Prostate gland (tissue), 2 donors: ENCODE measurements at regions of chr7 and their contacts with region 1.

Region 1: GRCh38 chr7:25669961-25670841 is 441.9 kb upstream of the NPVF start:
- DNase-seq: peak; percentile 70
- H3K4me3 ChIP-seq: no peak overlapping the region
- H3K27ac ChIP-seq: peak overlapping the region; percentile 53 to 64
- H3K4me1 ChIP-seq: peaks cover 6% of the 10 kb centered on the region
- H3K27me3 ChIP-seq: no peaks in the 10 kb centered on the region
- CTCF ChIP-seq: no peak
- POLR2A ChIP-seq: no peak

Region 2: DNA sequence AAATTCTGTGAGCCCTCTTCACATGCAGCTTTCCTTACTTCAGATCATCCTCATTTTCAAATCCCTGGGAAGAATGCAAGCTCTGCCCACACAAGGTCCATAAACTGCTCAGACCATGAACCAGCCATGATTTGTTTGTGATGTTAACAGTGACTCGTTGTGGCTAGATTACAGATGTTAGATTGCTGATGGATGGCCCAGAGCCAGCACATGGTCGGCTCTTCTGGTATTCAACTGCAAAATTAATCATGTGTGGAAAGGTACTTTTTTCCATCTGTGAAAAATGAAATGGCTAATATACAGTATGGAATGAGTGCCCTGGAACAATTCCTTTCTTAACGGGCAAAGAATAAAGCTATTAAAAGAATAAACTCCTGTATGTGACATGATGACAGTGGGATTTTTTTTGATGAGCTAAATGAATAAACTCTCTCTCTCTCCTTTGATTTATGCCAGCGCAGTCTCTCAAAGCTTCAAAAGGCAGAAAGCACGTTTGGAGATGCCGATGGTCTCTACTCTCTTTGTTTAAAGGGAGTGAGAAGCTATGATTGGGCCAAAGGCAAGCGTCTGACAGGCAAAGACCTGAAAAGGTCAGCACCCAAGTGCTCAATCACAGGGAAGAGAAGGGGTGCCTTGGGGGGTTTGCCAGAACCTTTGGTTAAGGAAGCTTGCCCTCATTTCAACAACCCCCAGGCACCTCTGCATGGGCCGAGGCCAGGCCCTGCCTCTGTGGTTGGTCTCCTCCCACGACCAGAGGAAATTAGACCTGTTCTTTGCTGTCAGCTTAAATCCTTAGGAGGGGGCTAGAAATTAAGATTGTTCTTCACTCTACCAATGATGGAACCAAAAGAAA is 37.8 kb after region 1 on chr7:
- intact Hi-C with region 1: loop called (anchors 5 kb)
- DNase-seq: no peak
- H3K4me3 ChIP-seq: no peak overlapping the region
- H3K27ac ChIP-seq: no peak overlapping the region
- H3K4me1 ChIP-seq: no peaks in the 10 kb centered on the region
- H3K27me3 ChIP-seq: no peaks in the 10 kb centered on the region
- CTCF ChIP-seq: no peak
- POLR2A ChIP-seq: no peak

Region 3: DNA sequence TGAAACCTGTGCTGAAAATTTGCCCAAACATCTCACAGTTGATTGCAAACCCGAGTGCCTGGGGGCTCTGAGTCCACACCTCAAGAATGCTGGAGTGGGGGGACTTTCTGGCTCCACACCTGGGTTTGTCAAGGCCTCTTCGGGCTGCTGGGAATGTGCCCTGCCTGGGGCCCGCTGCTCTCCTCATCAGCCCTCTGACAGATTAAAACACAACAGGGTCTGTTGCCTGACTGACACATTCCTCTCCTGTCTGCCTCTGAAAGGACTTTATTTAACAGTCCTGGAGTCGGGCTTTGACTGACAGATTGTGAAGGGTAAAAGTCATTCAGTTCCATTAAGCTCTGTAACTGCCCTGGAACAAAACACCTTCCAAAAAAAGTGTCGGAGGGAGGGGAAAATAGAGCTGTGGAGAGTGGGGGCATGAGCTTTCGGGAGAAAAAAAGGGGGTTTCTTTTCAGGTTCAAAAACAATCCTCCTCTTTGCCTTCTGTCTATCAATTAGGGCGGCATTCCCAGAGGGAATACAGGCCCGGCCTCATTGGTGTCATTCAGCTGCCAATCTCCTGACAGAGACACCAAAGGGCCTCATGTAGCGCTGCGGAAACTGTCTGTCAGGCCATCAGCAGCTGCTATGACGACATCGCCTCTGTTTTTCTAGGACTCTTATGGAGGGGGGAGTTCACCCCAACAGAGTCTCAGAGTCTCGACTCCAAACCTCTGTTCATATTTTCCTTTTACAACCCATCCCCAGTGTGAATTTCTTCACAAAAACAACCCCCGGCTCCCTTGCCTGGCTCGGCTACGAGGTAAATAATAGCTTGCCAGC is 83.0 kb after region 1 on chr7:
- intact Hi-C with region 1: loop called (anchors 5 kb)
- DNase-seq: no peak
- H3K4me3 ChIP-seq: no peak overlapping the region
- H3K27ac ChIP-seq: peak overlapping the region in 1 of 2 donors; percentile 49
- H3K4me1 ChIP-seq: no peaks in the 10 kb centered on the region
- H3K27me3 ChIP-seq: no peaks in the 10 kb centered on the region
- CTCF ChIP-seq: no peak
- POLR2A ChIP-seq: no peak

Region 4: GRCh38 chr7:25820432-25821040 is 150.3 kb after region 1 on chr7:
- intact Hi-C with region 1: no loop called
- DNase-seq: no peak
- H3K4me3 ChIP-seq: no peak overlapping the region
- H3K27ac ChIP-seq: no peak overlapping the region
- H3K4me1 ChIP-seq: no peaks in the 10 kb centered on the region
- H3K27me3 ChIP-seq: no peaks in the 10 kb centered on the region
- CTCF ChIP-seq: no peak
- POLR2A ChIP-seq: no peak